ENCODE measurements at regions of chr5 and their contacts with region 1.

Region 1: DNA sequence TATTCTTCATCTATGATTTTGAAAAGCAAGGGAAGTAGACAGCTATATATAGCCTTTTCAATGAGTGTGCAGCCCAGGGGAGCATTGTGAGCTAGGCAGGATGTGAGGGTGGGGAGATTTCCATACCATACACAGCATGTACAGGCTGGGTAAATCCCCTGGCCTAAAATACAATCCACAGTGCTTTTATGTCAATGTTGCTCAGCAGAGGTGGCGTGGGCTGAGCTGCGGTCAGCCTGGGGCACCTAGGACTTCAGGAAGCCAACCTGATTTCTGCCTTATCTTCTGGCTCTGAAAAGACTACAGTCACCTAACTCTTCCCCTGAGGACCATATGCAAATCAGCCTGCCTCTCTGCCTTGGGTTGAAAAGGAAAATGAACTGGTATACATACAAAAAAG is 6.3 kb upstream of the GARIN3 start:
- DNase-seq: peak in 13 of 14 experiments; percentile 39 to 94 (median 58)
- ATAC-seq: peak; percentile 97
- H3K4me3 ChIP-seq: peak overlapping the region; percentile 27
- H3K4me3 Mint-ChIP-seq: peak overlapping the region; percentile 58
- H3K27ac ChIP-seq: peak overlapping the region; percentile 77 to 83
- H3K27ac Mint-ChIP-seq: peak overlapping the region; percentile 85
- H3K4me1 ChIP-seq: peaks cover 59% of the 10 kb centered on the region
- H3K4me1 Mint-ChIP-seq: peaks cover 76% of the 10 kb centered on the region
- H3K27me3 ChIP-seq: no peaks in the 10 kb centered on the region
- H3K27me3 Mint-ChIP-seq: no peaks in the 10 kb centered on the region
- CTCF ChIP-seq: no peak

Region 2: GRCh38 chr5:157159209-157159751 is 13.1 kb before region 1 on chr5:
- CTCF ChIA-PET with region 1: interaction called, 4 read pairs
- POLR2A ChIA-PET with region 1: interaction called, 14 read pairs
- intact Hi-C with region 1: loop called in 1 of 2 experiments (anchors 1 kb)
- DNase-seq: peak in 11 of 14 experiments; percentile 23 to 90 (median 44)
- ATAC-seq: peak; percentile 80
- H3K4me3 ChIP-seq: no peak overlapping the region
- H3K4me3 Mint-ChIP-seq: peak overlapping the region; percentile 54
- H3K27ac ChIP-seq: peak overlapping the region; percentile 79 to 93
- H3K27ac Mint-ChIP-seq: peak overlapping the region; percentile 65
- H3K4me1 ChIP-seq: peaks cover 39% of the 10 kb centered on the region
- H3K4me1 Mint-ChIP-seq: peaks cover 69% of the 10 kb centered on the region
- H3K27me3 ChIP-seq: no peaks in the 10 kb centered on the region
- H3K27me3 Mint-ChIP-seq: no peaks in the 10 kb centered on the region
- CTCF ChIP-seq: no peak

Region 3: DNA sequence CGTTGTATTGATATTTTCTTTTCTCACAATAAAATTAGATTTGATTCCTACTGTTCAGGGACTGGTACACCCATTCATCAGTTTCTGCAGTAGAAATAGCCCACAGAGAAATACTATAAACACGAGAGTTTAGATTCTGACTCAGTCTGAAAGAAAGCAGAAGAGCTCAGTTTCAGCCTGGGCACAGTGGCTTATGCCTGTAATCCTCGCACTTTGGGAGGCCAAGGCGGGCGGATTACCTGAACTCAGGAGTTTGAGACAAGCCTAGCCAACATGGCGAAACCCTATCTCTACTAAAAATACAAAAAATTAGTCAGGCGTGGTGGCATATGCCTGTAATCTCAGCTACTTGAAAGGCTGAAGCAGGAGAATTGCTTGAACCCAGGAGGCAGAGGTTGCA is 16.8 kb after region 1 on chr5:
- CTCF ChIA-PET with region 1: interaction called, 5 read pairs
- POLR2A ChIA-PET with region 1: interaction called, 37 read pairs
- intact Hi-C with region 1: no loop called
- DNase-seq: peak in 1 of 14 experiments; percentile 42
- ATAC-seq: no peak
- H3K4me3 ChIP-seq: peak overlapping the region; percentile 85
- H3K4me3 Mint-ChIP-seq: peak overlapping the region; percentile 92
- H3K27ac ChIP-seq: peak overlapping the region; percentile 38 to 67
- H3K27ac Mint-ChIP-seq: peak overlapping the region; percentile 96
- H3K4me1 ChIP-seq: peaks cover 72% of the 10 kb centered on the region
- H3K4me1 Mint-ChIP-seq: peaks cover 92% of the 10 kb centered on the region
- H3K27me3 ChIP-seq: no peaks in the 10 kb centered on the region
- H3K27me3 Mint-ChIP-seq: no peaks in the 10 kb centered on the region
- CTCF ChIP-seq: no peak

Region 4: GRCh38 chr5:157204765-157205164 is 32.4 kb after region 1 on chr5:
- CTCF ChIA-PET with region 1: no interaction called
- POLR2A ChIA-PET with region 1: interaction called, 10 read pairs
- intact Hi-C with region 1: no loop called
- DNase-seq: peak in 4 of 14 experiments; percentile 46 to 80 (median 77)
- ATAC-seq: peak; percentile 56
- H3K4me3 ChIP-seq: no peak overlapping the region
- H3K4me3 Mint-ChIP-seq: peak overlapping the region; percentile 72
- H3K27ac ChIP-seq: peak overlapping the region; percentile 73 to 83
- H3K27ac Mint-ChIP-seq: peak overlapping the region; percentile 96
- H3K4me1 ChIP-seq: peaks cover 86% of the 10 kb centered on the region
- H3K4me1 Mint-ChIP-seq: peaks cover 92% of the 10 kb centered on the region
- H3K27me3 ChIP-seq: no peaks in the 10 kb centered on the region
- H3K27me3 Mint-ChIP-seq: no peaks in the 10 kb centered on the region
- CTCF ChIP-seq: no peak